ENCODE measurements at regions of chr16 and their contacts with region 1.

Region 1: GRCh38 chr16:14003074-14003570 is 68.0 kb upstream of the MRTFB start:
- H3K4me3 Mint-ChIP-seq: peak overlapping the region; percentile 63
- H3K27ac Mint-ChIP-seq: peak overlapping the region; percentile 78
- H3K4me1 Mint-ChIP-seq: peaks cover 87% of the 10 kb centered on the region
- H3K27me3 Mint-ChIP-seq: peaks cover 3% of the 10 kb centered on the region

Region 2: GRCh38 chr16:13630374-13630773 is 372.7 kb before region 1 on chr16:
- intact Hi-C with region 1: no loop called
- H3K4me3 Mint-ChIP-seq: no peak overlapping the region
- H3K27ac Mint-ChIP-seq: no peak overlapping the region
- H3K4me1 Mint-ChIP-seq: no peaks in the 10 kb centered on the region
- H3K27me3 Mint-ChIP-seq: no peaks in the 10 kb centered on the region

Region 3: GRCh38 chr16:13926464-13926863 is 76.7 kb before region 1 on chr16:
- intact Hi-C with region 1: loop called (anchors 5 kb)
- H3K4me3 Mint-ChIP-seq: no peak overlapping the region
- H3K27ac Mint-ChIP-seq: peak overlapping the region; percentile 25
- H3K4me1 Mint-ChIP-seq: peaks cover 30% of the 10 kb centered on the region
- H3K27me3 Mint-ChIP-seq: no peaks in the 10 kb centered on the region

Region 4: DNA sequence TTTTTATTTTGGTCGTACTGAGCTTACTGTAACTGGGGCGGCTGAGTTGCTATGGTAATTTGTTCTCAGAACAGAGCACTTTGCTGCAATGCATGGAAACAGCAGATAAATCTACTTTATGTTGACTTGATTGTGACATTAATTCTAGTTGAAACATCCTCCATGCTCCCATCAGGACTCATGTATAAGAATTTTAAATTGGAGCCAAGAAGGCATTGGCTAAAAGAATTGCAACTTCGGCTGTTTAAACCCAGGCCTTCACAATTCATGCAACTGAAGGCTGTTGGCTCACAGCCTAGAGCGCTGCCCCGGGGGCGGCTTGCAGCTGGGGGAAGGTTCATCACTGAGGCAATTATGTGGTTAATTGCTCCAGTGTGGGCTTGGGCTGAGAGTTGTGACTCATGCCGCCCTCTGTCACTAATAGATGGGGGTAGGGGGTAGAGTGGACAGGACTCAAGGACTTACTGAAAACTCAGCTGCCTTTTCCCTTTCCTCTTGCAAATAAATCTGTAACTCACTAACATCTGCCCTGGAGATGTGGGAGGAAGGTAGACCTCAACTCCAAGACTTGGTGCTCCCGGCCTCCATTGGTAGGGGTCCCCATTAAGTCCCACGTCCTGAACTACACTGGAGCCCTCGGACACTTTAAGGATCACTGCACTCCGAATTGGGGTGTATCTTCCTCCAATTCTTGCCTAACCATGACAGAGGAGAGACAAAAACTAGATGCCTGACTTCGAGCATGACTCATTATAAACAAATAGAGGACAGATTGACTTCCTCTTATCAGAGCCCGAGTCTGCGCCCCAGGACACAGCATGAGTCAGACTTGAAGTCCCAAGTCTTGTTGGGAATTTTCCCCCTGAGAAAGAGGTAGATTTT is 45.7 kb before region 1 on chr16:
- intact Hi-C with region 1: loop called (anchors 5 kb)
- H3K4me3 Mint-ChIP-seq: peak overlapping the region; percentile 67
- H3K27ac Mint-ChIP-seq: peak overlapping the region; percentile 92
- H3K4me1 Mint-ChIP-seq: peaks cover 40% of the 10 kb centered on the region
- H3K27me3 Mint-ChIP-seq: peaks cover 10% of the 10 kb centered on the region

Region 5: DNA sequence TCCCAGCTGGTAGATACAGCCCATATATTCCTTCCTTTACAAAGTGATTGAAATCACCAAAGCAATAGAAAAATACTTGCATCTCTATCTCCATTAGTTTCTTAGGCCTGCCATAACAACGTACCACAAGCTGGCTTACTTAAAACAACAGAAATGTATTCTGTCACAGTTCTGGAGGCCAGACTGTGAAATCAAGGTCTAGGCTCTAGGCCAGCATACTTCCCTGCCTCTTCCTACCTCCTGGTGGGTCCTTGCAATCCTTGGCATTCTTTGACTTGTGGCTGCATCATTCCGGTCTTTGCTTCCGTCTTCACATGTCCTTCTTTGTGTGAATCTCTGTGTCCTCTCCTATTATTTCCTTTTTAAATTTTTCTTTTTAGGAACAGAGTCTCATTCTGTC is 20.7 kb before region 1 on chr16:
- intact Hi-C with region 1: no loop called
- H3K4me3 Mint-ChIP-seq: no peak overlapping the region
- H3K27ac Mint-ChIP-seq: no peak overlapping the region
- H3K4me1 Mint-ChIP-seq: no peaks in the 10 kb centered on the region
- H3K27me3 Mint-ChIP-seq: peaks cover 14% of the 10 kb centered on the region

Region 6: GRCh38 chr16:14070877-14071575 is 67.9 kb after region 1 on chr16 and contains the start of gene MRTFB:
- intact Hi-C with region 1: loop called (anchors 10 kb)
- H3K4me3 Mint-ChIP-seq: peak within 1 kb of the TSS; percentile 89
- H3K27ac Mint-ChIP-seq: peak within 1 kb of the TSS; percentile 87
- H3K4me1 Mint-ChIP-seq: peaks cover 11% of the 10 kb centered on the region
- H3K27me3 Mint-ChIP-seq: peaks cover 26% of the 10 kb centered on the region

Region 7: DNA sequence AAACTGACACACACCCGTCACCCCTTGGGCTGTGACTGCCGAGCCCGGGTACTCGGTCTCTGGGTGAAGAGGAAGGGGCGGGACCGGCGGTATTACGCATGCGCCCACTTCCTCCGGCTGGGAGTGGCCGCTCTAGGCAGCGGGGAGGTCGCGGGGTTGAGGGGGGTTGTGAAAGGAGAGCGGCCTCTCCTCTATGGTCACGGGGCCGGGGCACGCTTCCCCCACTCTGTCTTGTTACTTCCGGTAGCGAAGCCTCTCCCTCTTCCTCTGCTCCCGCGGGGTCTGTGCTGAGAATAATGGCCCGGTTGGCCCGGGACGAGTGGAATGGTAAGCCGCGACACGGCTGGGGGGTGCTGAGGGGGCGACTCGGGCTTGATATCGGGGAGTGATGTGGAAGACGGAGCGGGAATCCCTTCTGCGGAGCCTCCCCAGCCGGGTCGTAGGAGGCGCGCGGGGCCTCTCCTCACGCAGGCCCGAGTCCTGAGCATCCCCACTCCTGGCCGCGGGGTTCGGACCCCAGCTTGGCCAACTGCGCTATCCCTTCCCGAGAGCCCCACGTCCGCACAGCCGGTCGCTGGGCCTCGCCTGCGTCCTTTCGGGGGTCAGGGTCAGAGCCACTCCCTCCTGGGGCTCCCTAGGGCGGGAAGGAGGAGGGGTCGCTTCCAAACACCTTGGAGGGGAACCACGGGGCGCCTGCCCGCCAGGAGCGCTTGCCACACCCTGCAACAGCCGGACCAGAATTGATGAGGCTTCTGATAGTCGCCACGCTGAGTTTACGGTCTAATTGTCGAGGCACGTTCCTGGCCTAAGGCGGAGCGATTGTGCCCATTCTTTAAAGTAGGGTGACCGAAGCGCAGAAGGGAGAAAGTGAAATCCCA is 629.8 kb after region 1 on chr16 and contains the start of gene BFAR:
- intact Hi-C with region 1: loop called (anchors 5 kb)
- H3K4me3 Mint-ChIP-seq: peak within 1 kb of the TSS; percentile 95
- H3K27ac Mint-ChIP-seq: peak within 1 kb of the TSS; percentile 85
- H3K4me1 Mint-ChIP-seq: peaks cover 38% of the 10 kb centered on the region
- H3K27me3 Mint-ChIP-seq: no peaks in the 10 kb centered on the region